CD8-positive, alpha-beta memory T cell (primary cell): ENCODE measurements at regions of chr4 and their contacts with region 1.

Region 1: GRCh38 chr4:40301603-40302002 is 33.5 kb upstream of the CHRNA9 start:
- DNase-seq: peak in 4 of 5 donors; percentile 20 to 92 (median 84)
- H3K4me3 ChIP-seq: peak overlapping the region; percentile 27
- H3K4me3 Mint-ChIP-seq: peak overlapping the region; percentile 11 to 81 (median 69)
- H3K27ac ChIP-seq: no peak overlapping the region
- H3K27ac Mint-ChIP-seq: peak overlapping the region; percentile 90 to 99 (median 96)
- H3K4me1 ChIP-seq: peaks cover 92% of the 10 kb centered on the region
- H3K4me1 Mint-ChIP-seq: peaks cover 68 to 89% (median 81%) of the 10 kb centered on the region in 3 donors
- H3K27me3 ChIP-seq: no peaks in the 10 kb centered on the region
- H3K27me3 Mint-ChIP-seq: peaks cover 0 to 2% of the 10 kb centered on the region in 2 donors

Region 2: GRCh38 chr4:40283968-40284367 is 17.6 kb before region 1 on chr4:
- CTCF ChIA-PET with region 1: interaction called, 111 read pairs
- POLR2A ChIA-PET with region 1: interaction called, 16 read pairs
- DNase-seq: peak; percentile 58 to 93 (median 78)
- H3K4me3 ChIP-seq: no peak overlapping the region
- H3K4me3 Mint-ChIP-seq: peak overlapping the region in 6 of 7 donors; percentile 64 to 89 (median 72)
- H3K27ac ChIP-seq: no peak overlapping the region
- H3K27ac Mint-ChIP-seq: peak overlapping the region; percentile 88 to 98 (median 94)
- H3K4me1 ChIP-seq: peaks cover 55% of the 10 kb centered on the region
- H3K4me1 Mint-ChIP-seq: peaks cover 48 to 77% (median 58%) of the 10 kb centered on the region in 3 donors
- H3K27me3 ChIP-seq: no peaks in the 10 kb centered on the region
- H3K27me3 Mint-ChIP-seq: no peaks in the 10 kb centered on the region

Region 3: DNA sequence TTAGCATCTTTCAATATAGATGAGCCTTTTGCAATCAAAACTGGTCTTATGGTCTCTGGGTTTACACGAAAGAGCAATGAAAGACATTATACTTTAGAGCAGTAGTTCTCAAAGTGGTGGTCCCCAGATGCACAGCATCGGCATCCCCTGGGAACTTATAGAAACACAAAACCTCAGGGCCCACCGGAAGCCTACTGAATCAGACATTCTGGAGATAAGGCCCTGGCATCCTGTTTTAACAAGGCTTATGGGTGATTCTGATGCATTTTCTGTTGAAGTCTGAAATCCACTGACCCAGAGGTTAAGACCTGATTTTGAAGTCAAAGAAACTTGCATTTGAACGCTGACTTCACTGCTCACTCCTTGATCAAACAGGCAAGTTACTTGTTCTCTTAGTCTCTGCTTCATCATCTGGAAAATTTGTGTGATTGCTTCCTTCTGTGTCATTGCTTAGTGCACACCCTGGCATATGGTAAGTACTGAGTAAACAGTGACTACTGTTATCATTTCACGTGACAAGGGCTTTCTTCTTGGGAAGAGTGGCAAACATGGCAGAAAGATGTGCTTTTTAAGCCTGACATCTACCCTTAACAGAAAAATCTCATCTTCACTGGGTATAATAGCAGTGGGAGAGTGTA is 48.1 kb after region 1 on chr4:
- CTCF ChIA-PET with region 1: no interaction called
- POLR2A ChIA-PET with region 1: no interaction called
- DNase-seq: no peak
- H3K4me3 ChIP-seq: no peak overlapping the region
- H3K4me3 Mint-ChIP-seq: no peak overlapping the region
- H3K27ac ChIP-seq: no peak overlapping the region
- H3K27ac Mint-ChIP-seq: no peak overlapping the region
- H3K4me1 ChIP-seq: peaks cover 4% of the 10 kb centered on the region
- H3K4me1 Mint-ChIP-seq: no peaks in the 10 kb centered on the region
- H3K27me3 ChIP-seq: no peaks in the 10 kb centered on the region
- H3K27me3 Mint-ChIP-seq: peaks cover 2 to 9% of the 10 kb centered on the region in 2 donors

Region 4: GRCh38 chr4:40607221-40607620 is 305.6 kb after region 1 on chr4:
- CTCF ChIA-PET with region 1: no interaction called
- POLR2A ChIA-PET with region 1: no interaction called
- DNase-seq: no peak
- H3K4me3 ChIP-seq: no peak overlapping the region
- H3K4me3 Mint-ChIP-seq: no peak overlapping the region
- H3K27ac ChIP-seq: no peak overlapping the region
- H3K27ac Mint-ChIP-seq: no peak overlapping the region
- H3K4me1 ChIP-seq: no peaks in the 10 kb centered on the region
- H3K4me1 Mint-ChIP-seq: no peaks in the 10 kb centered on the region
- H3K27me3 ChIP-seq: no peaks in the 10 kb centered on the region
- H3K27me3 Mint-ChIP-seq: peaks cover 2 to 9% of the 10 kb centered on the region in 2 donors